ENCODE measurements at regions of chr10 and their contacts with region 1.

Region 1: GRCh38 chr10:73997787-73998622 is at the start of gene VCL:
- DNase-seq: peak; percentile 92 to 96 (median 96)
- H3K4me3 ChIP-seq: peak within 1 kb of the TSS; percentile 74 to 97 (median 92)
- H3K27ac ChIP-seq: peak within 1 kb of the TSS; percentile 33 to 82
- H3K4me1 ChIP-seq: peaks cover 7 to 48% (median 32%) of the 10 kb centered on the region in 4 experiments
- H3K27me3 ChIP-seq: no peaks in the 10 kb centered on the region

Region 2: DNA sequence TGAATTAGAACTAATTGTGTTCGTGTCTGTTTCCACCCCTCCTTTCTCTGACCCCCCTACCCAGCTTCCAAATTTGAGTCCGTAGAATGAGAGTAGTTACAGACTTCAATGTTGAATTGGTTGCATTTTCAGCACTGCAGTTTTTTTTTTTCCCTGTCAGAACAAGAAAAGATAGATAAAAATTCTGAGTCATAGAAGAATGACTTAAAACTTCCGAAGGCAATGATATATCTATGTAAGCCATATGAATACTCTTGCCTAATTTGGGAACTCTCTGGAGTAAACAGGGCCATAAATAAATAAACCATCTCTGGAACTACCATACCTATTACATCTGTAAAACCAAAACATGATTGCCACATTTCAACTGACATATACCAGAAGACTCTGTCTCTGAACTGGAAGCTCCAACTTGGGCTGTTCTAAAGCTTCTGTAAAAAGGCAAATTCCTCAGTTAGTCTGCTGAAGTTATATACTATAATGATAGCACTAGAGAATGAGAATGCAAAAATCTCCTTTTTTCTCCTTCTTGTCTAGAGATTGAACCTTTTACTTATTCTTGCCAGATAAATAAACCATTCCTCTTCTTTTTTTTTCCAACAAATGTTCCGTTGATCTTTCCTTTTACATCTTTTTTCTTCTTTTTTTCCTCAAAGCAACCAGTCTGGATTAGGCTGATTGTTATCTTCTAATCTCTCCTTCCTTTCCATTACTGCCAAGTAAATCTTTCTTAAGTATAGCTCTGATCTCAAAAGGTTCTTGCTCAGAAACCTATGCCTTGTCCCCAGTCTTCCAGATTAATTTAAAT is 23.4 kb after region 1 on chr10:
- CTCF ChIA-PET with region 1: interaction called, 12 read pairs
- POLR2A ChIA-PET with region 1: interaction called, 3 read pairs
- DNase-seq: peak; percentile 38 to 82 (median 70)
- H3K4me3 ChIP-seq: peak overlapping the region in 2 of 7 experiments; percentile 45 to 53
- H3K27ac ChIP-seq: peak overlapping the region; percentile 70 to 83
- H3K4me1 ChIP-seq: peaks cover 2 to 19% (median 11%) of the 10 kb centered on the region in 4 experiments
- H3K27me3 ChIP-seq: no peaks in the 10 kb centered on the region

Measured in common myeloid progenitor, CD34-positive (primary cell).